MCF 10A (cell line): ENCODE measurements at regions of chr20 and their contacts with region 1.

Region 1: GRCh38 chr20:44388466-44389023 is 33.0 kb downstream of the HNF4A start:
- DNase-seq: peak; percentile 81
- H3K4me3 Mint-ChIP-seq: peak overlapping the region; percentile 24
- H3K27ac Mint-ChIP-seq: peak overlapping the region; percentile 13
- H3K4me1 Mint-ChIP-seq: peaks cover 24% of the 10 kb centered on the region
- H3K27me3 Mint-ChIP-seq: no peaks in the 10 kb centered on the region
- CTCF ChIP-seq: peak; percentile 91

Region 2: GRCh38 chr20:44302026-44302669 is 86.4 kb before region 1 on chr20:
- CTCF ChIA-PET with region 1: interaction called, 10 read pairs
- POLR2A ChIA-PET with region 1: no interaction called
- intact Hi-C with region 1: no loop called
- DNase-seq: no peak
- H3K4me3 Mint-ChIP-seq: no peak overlapping the region
- H3K27ac Mint-ChIP-seq: no peak overlapping the region
- H3K4me1 Mint-ChIP-seq: peaks cover 6% of the 10 kb centered on the region
- H3K27me3 Mint-ChIP-seq: no peaks in the 10 kb centered on the region
- CTCF ChIP-seq: no peak

Region 3: DNA sequence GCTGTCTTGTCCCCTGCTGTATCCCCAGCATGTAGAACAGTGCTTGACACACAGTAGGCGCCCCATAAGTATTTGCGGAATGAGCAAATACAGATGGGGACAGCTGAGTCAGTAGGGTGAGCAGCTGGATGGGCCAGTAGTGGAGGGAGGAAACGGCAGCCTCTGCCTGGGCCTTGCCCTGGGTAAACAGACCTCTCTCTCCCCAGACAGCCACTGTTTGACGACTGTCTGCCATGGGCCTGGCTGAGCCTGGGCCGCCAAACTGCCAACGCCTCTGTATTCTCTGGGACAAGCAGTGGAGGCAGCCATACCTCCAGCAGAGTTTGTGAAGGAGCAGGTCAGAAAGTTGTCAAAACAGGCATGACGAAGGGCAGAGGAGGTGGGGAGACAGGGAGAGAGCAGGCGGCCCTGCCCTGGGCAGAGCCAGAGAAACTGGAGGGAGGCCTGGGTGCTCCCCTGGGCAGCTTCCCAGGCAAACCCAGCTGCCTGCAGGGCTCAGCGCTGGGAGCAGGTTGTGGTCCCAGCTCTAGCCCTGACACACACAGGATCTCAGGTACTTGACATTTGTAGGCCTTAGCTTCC is 17.8 kb before region 1 on chr20:
- CTCF ChIA-PET with region 1: interaction called, 12 read pairs
- POLR2A ChIA-PET with region 1: no interaction called
- intact Hi-C with region 1: no loop called
- DNase-seq: no peak
- H3K4me3 Mint-ChIP-seq: no peak overlapping the region
- H3K27ac Mint-ChIP-seq: no peak overlapping the region
- H3K4me1 Mint-ChIP-seq: no peaks in the 10 kb centered on the region
- H3K27me3 Mint-ChIP-seq: peaks cover 12% of the 10 kb centered on the region
- CTCF ChIP-seq: no peak

Region 4: GRCh38 chr20:44448753-44449546 is 60.4 kb after region 1 on chr20:
- CTCF ChIA-PET with region 1: interaction called, 24 read pairs
- POLR2A ChIA-PET with region 1: no interaction called
- intact Hi-C with region 1: no loop called
- DNase-seq: peak; percentile 36
- H3K4me3 Mint-ChIP-seq: no peak overlapping the region
- H3K27ac Mint-ChIP-seq: no peak overlapping the region
- H3K4me1 Mint-ChIP-seq: peaks cover 13% of the 10 kb centered on the region
- H3K27me3 Mint-ChIP-seq: no peaks in the 10 kb centered on the region
- CTCF ChIP-seq: peak; percentile 24

Region 5: DNA sequence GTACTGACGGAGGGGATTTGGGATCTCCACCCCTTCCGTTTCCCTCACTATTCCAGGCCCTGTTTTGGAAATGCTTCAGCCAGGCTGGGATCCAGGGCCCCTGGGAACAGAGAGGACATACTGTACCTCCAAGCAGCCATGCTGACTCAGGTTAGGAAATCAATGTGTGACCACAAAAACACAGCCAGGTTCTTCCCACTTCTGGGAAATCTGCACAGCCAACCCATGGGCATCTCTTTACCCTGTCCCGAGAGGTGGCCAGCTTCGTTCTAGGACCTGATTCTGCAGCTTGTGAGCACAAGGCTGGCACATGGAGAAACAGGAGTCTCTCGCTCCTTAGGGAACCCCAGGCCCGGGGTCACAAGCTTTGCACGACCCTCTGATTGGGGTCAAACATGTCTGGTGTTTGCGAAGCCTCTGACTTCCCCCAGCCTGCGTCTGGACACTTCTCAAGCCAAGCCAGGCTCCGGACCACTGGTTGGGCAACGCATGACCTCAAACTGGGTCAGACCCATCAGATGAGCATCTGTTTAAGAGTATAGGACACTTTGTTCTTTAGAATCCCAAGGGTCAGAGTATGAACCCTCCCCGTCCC is 78.8 kb after region 1 on chr20:
- CTCF ChIA-PET with region 1: interaction called, 155 read pairs
- POLR2A ChIA-PET with region 1: interaction called, 11 read pairs
- intact Hi-C with region 1: loop called (anchors 1 kb)
- DNase-seq: peak; percentile 97
- H3K4me3 Mint-ChIP-seq: peak overlapping the region; percentile 26
- H3K27ac Mint-ChIP-seq: peak overlapping the region; percentile 58
- H3K4me1 Mint-ChIP-seq: peaks cover 40% of the 10 kb centered on the region
- H3K27me3 Mint-ChIP-seq: no peaks in the 10 kb centered on the region
- CTCF ChIP-seq: no peak